Right lobe of liver (tissue), 6 donors: ENCODE measurements at regions of chr20 and their contacts with region 1.

Region 1: DNA sequence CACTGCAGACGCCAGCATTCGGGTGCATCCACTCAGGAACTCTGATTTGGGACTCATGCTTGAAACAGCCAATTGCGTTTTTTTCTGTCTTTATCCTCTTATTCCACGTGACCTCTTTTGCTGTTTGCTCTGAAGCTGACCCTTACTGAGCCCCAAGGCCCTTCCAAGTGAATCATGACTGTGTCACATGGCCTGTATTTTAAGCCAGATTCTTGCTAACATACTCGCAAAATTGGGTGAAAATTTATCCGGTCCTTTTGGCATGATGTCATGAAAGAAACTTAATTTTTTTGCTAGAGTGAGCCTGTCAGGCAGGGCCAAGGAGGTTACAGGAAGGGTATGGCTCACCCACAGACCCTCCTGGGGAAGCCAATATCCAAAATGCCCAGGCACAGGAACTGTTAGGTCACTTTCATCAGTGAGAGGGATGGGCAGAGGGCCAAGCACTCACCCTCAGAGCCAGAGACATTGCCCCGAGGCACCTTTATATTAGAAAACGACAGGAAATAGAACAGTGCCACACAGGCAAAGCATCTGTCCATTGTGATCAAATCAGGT is 296.7 kb downstream of the CDH26 start:
- DNase-seq: no peak
- ATAC-seq: peak; percentile 26 to 68 (median 56)
- H3K4me3 ChIP-seq: no peak overlapping the region
- H3K27ac ChIP-seq: peak overlapping the region in 1 of 3 donors; percentile 24
- H3K4me1 ChIP-seq: peaks cover 0 to 4% (median 0%) of the 10 kb centered on the region in 4 donors
- H3K27me3 ChIP-seq: no peaks in the 10 kb centered on the region
- CTCF ChIP-seq: no peak
- POLR2A ChIP-seq: no peak

Region 2: DNA sequence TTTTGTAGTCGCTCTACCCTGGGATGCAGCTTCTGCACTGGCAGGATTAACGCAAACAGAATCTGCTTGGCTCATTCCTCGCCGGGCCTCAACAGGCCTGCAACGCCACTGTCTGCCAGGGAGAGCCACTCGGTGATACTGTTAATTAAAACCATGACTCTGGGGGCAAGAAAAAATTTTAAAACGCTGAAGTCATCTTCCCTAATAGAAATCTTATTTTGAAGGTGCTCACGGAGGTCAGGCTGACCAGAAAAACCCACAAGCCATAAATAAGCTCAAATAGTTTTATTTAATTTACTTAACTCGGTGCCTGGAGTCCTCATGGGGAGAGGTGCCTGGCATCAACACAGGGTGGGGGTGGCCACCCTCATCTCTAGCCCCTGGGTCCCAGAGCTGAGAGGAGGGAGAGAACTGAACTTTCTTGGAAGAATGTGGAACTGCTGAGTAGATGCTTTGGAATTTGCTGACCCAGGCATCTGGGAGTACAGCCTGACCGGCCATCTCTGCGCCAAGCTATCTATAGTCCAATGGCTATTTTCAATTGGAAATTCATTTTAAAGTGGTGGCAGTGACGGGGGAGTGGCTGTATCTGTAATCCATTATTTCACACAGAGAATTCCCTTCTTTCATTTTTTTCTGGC is 192.0 kb before region 1 on chr20:
- intact Hi-C with region 1: loop called in 1 of 2 experiments (anchors 10 kb)
- DNase-seq: peak in 1 of 3 donors; percentile 26
- ATAC-seq: no peak
- H3K4me3 ChIP-seq: no peak overlapping the region
- H3K27ac ChIP-seq: no peak overlapping the region
- H3K4me1 ChIP-seq: no peaks in the 10 kb centered on the region
- H3K27me3 ChIP-seq: no peaks in the 10 kb centered on the region
- CTCF ChIP-seq: no peak
- POLR2A ChIP-seq: no peak